IMR-90 (cell line): ENCODE measurements at regions of chr7 and their contacts with region 1.

Region 1: GRCh38 chr7:18119985-18120384 is 92.3 kb upstream of the PRPS1L1 start:
- DNase-seq: peak; percentile 19
- ATAC-seq: peak; percentile 60
- H3K4me3 ChIP-seq: no peak overlapping the region
- H3K27ac ChIP-seq: no peak overlapping the region
- H3K4me1 ChIP-seq: no peaks in the 10 kb centered on the region
- H3K27me3 ChIP-seq: peaks cover 1% of the 10 kb centered on the region; the same call in 1 of the 2 replicates
- CTCF ChIP-seq: peak; percentile 36
- POLR2A ChIP-seq: no peak
- RAD21 ChIP-seq: peak; percentile 53

Region 2: GRCh38 chr7:17706734-17707133 is 413.3 kb before region 1 on chr7:
- CTCF ChIA-PET with region 1: no interaction called
- POLR2A ChIA-PET with region 1: no interaction called
- dilution Hi-C with region 1: no loop called
- in situ Hi-C with region 1: no loop called
- intact Hi-C with region 1: loop called (anchors 1 kb)
- DNase-seq: peak; percentile 72
- ATAC-seq: peak; percentile 82
- H3K4me3 ChIP-seq: no peak overlapping the region
- H3K27ac ChIP-seq: no peak overlapping the region
- H3K4me1 ChIP-seq: no peaks in the 10 kb centered on the region
- H3K27me3 ChIP-seq: peaks cover 5% of the 10 kb centered on the region
- CTCF ChIP-seq: peak; percentile 77
- POLR2A ChIP-seq: no peak
- RAD21 ChIP-seq: peak; percentile 80